Caco-2 (cell line): ENCODE measurements at regions of chr15 and their contacts with region 1.

Region 1: DNA sequence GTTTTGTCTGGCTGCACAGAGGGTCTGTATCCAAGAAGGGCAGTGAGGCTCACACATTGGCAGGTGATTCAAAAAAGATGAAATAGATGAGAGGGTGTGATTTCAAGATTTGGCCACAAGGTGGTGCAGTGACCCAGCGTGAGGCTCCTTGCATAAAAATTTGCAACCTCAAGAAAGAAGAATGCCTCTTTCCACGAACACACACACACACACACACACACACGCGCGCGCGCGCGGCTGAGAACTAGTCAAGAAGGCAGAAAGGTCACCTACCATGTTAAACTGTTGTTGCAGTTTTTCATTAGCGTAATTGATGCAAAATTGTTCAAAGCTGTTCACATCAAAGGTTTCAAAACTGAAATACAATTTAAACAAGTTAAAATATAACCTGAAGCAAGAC is 39.2 kb downstream of the MYO5C start:
- DNase-seq: peak; percentile 61 to 70
- H3K4me3 ChIP-seq: no peak overlapping the region
- H3K4me3 Mint-ChIP-seq: no peak overlapping the region
- H3K27ac Mint-ChIP-seq: peak overlapping the region; percentile 33
- H3K4me1 ChIP-seq: no peaks in the 10 kb centered on the region
- H3K4me1 Mint-ChIP-seq: no peaks in the 10 kb centered on the region
- H3K27me3 ChIP-seq: no peaks in the 10 kb centered on the region
- H3K27me3 Mint-ChIP-seq: no peaks in the 10 kb centered on the region
- CTCF ChIP-seq: peak; percentile 66 to 69

Region 2: DNA sequence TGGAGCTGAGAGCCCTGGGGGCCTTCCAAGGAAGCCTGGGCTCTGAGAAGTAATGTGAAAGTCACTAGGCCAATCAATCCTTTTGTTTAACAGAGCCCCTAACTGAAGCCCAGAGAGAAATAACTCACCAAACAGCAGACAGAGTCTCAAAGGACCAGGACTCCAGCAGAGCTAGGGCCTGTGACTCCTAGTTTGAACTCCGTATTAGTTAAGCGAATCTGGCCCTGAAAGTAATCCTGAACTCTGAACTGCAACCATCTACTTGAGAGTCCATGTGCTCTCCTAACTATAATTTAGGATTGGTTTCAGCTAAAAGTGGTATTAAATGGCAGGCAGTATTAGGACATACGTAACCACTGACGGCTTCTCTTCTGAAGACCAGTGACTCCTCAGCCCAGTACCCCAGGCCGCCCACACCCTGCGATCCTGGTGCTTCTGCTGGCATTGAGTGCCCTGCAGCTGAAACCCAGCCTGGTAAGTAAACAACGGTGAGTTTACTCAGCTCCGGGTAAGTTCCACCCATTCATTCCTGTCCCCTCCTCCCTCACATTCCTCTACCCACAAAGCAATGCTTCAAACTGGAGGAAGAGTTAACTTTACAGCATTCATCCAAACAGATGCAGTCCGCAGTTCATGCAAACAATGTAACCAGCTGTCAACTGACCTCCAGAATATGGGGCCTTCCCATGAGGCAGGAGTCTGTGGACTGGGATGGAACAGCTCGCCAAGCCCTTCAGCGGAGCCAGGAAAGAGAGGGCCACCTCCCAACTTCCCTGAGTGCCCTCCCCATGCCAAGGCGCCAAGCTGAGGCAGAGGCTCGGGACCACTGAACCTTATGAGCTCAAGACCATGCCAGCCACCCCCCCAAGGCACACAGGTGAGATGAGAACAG is 31.9 kb after region 1 on chr15:
- CTCF ChIA-PET with region 1: interaction called, 4 read pairs
- POLR2A ChIA-PET with region 1: interaction called, 4 read pairs
- intact Hi-C with region 1: loop called (anchors 2 kb)
- DNase-seq: peak; percentile 82 to 86
- H3K4me3 ChIP-seq: peak overlapping the region; percentile 16; the same call in 1 of the 2 replicates
- H3K4me3 Mint-ChIP-seq: peak overlapping the region; percentile 61
- H3K27ac Mint-ChIP-seq: peak overlapping the region; percentile 90
- H3K4me1 ChIP-seq: peaks cover 35% of the 10 kb centered on the region
- H3K4me1 Mint-ChIP-seq: peaks cover 48% of the 10 kb centered on the region
- H3K27me3 ChIP-seq: no peaks in the 10 kb centered on the region
- H3K27me3 Mint-ChIP-seq: no peaks in the 10 kb centered on the region
- CTCF ChIP-seq: no peak

Region 3: GRCh38 chr15:52392008-52392687 is 135.8 kb after region 1 on chr15:
- CTCF ChIA-PET with region 1: no interaction called
- POLR2A ChIA-PET with region 1: no interaction called
- intact Hi-C with region 1: loop called (anchors 10 kb)
- DNase-seq: no peak
- H3K4me3 ChIP-seq: no peak overlapping the region
- H3K4me3 Mint-ChIP-seq: no peak overlapping the region
- H3K27ac Mint-ChIP-seq: no peak overlapping the region
- H3K4me1 ChIP-seq: no peaks in the 10 kb centered on the region
- H3K4me1 Mint-ChIP-seq: no peaks in the 10 kb centered on the region
- H3K27me3 ChIP-seq: no peaks in the 10 kb centered on the region
- H3K27me3 Mint-ChIP-seq: no peaks in the 10 kb centered on the region
- CTCF ChIP-seq: no peak

Region 4: DNA sequence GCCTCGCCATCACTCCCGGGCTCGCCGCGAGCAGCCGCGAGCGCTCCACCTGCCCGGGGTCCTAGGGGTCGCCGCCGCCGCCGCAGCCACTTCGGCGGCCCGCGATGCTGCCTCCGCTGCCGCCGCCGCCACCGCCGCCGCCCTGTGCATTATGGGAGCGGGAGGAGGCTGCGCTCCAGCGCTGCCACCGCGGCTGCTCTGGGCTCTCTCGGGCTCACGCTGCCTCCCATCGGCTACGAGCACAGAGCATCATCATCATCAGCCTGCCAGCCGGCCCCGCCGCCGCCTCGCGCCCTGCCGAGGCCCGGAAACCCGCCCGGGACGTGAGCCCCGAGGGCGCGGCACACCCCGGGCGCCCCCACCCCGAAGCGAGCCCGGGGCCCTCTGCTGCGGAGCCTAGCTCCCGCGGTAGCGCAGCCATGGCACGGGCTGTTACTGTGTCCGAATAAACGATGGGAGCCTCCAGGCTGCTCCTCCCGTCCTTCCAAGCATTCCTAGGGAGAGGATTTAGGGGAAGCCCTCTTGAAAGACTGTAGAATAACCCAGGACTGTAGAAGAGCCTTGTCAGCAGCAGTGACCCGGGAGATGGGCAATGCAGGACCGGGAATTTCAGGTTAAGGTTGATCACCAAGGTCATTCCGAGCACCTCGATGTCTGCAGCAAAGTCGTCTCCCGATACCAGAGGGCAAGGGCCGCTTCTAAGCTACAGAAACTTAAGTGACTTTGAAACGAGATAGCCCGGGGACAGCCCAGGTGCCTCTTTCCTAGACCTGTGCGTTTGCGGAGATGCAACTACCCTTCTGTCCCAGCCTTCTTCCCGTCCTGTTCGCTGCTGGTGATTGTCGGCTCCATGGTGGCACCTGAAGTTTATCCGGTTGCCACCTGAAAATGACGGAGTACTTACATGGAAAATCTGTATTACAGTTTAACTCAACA is 272.9 kb after region 1 on chr15:
- CTCF ChIA-PET with region 1: no interaction called
- POLR2A ChIA-PET with region 1: no interaction called
- intact Hi-C with region 1: loop called (anchors 10 kb)
- DNase-seq: peak; percentile 49 to 65
- H3K4me3 ChIP-seq: peak overlapping the region; percentile 56
- H3K4me3 Mint-ChIP-seq: peak overlapping the region; percentile 71
- H3K27ac Mint-ChIP-seq: no peak overlapping the region
- H3K4me1 ChIP-seq: peaks cover 6% of the 10 kb centered on the region; the same call in 1 of the 2 replicates
- H3K4me1 Mint-ChIP-seq: peaks cover 7% of the 10 kb centered on the region
- H3K27me3 ChIP-seq: no peaks in the 10 kb centered on the region
- H3K27me3 Mint-ChIP-seq: peaks cover 22% of the 10 kb centered on the region
- CTCF ChIP-seq: no peak

Region 5: DNA sequence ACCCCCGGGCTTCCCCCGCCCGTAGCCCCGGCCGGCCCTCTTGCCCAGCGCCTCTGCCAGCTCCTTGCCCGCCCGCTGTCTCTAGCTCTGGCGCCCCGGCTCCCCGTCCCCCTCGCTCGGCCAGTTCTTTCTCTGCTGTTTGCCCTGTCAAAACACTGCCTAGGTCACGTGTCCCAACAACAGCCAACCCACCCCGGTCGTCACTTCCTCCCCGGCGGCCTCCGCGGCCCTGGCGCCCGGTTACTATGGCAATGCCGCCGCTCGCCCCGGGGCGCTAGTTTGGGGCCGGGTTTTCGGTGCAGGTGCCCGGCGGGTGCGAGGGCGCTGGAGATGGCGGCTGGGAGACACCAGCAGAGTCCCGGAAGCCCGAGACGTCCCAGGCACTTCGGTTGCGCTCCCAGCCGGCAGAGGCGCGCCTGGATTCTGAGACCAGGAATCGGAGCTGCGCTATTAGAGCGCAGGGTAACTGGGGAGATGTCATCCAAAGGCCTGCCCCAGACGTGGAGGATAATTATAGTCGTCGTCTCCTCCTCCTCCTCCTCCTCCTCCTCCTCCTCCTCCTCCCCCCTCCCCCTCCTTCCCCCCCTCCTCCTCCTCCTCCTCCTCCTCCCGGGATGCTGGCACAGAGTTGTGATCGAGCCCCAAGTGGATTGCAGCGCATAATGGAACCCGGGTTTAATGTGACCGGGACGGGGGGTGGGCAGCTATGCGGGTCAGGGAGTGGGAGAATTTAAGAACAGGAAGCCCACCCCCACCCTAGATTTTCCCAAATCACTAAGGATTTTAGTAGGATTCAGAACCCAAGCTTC is 423.1 kb after region 1 on chr15 and contains the start of gene ATOSA:
- CTCF ChIA-PET with region 1: no interaction called
- POLR2A ChIA-PET with region 1: no interaction called
- intact Hi-C with region 1: loop called (anchors 5 kb)
- DNase-seq: peak; percentile 88 to 94
- H3K4me3 ChIP-seq: peak within 1 kb of the TSS; percentile 92
- H3K4me3 Mint-ChIP-seq: peak within 1 kb of the TSS; percentile 92
- H3K27ac Mint-ChIP-seq: peak within 1 kb of the TSS; percentile 89
- H3K4me1 ChIP-seq: peaks cover 9% of the 10 kb centered on the region
- H3K4me1 Mint-ChIP-seq: no peaks in the 10 kb centered on the region
- H3K27me3 ChIP-seq: no peaks in the 10 kb centered on the region
- H3K27me3 Mint-ChIP-seq: peaks cover 5% of the 10 kb centered on the region
- CTCF ChIP-seq: peak in 1 of 2 experiments; percentile 18
- total RNA-seq, gene ATOSA: 17.6 and 18.4 TPM in 2 replicates